Activated CD8-positive, alpha-beta memory T cell treated with anti-CD3 and anti-CD28 coated beads, Interleukin-2, amount 10 ng/mL, durations not matched to agents 7 days and 5 days (primary cell): ENCODE measurements at regions of chr19 and their contacts with region 1.

Region 1: GRCh38 chr19:14419106-14419813 is at the start of gene DDX39A:
- DNase-seq: peak; percentile 99
- ATAC-seq: peak; percentile 93
- H3K4me3 Mint-ChIP-seq: peak within 1 kb of the TSS; percentile 86
- H3K27ac Mint-ChIP-seq: peak within 1 kb of the TSS; percentile 94
- H3K4me1 Mint-ChIP-seq: peaks cover 33% of the 10 kb centered on the region
- H3K27me3 Mint-ChIP-seq: no peaks in the 10 kb centered on the region
- total RNA-seq, gene DDX39A: 273 to 311 TPM

Region 2: GRCh38 chr19:14432791-14433553 is 13.7 kb after region 1 on chr19 and contains the start of gene PKN1:
- CTCF ChIA-PET with region 1: interaction called, 27 read pairs
- DNase-seq: peak; percentile 67
- ATAC-seq: peak; percentile 66
- H3K4me3 Mint-ChIP-seq: peak within 1 kb of the TSS; percentile 77
- H3K27ac Mint-ChIP-seq: peak within 1 kb of the TSS; percentile 76
- H3K4me1 Mint-ChIP-seq: peaks cover 32% of the 10 kb centered on the region
- H3K27me3 Mint-ChIP-seq: peaks cover 5% of the 10 kb centered on the region
- total RNA-seq, gene PKN1: 224 to 236 TPM